Right ventricle myocardium superior (tissue), 1 donor: ENCODE measurements at regions of chr15 and their contacts with region 1.

Region 1: GRCh38 chr15:75201609-75202250 is at the start of gene C15orf39:
- DNase-seq: peak; percentile 87
- ATAC-seq: peak; percentile 84
- total RNA-seq, gene C15orf39: 15.8 TPM

Region 2: GRCh38 chr15:74956648-74957300 is 245.0 kb before region 1 on chr15 and contains the start of gene RPP25:
- intact Hi-C with region 1: loop called (anchors 10 kb)
- DNase-seq: peak; percentile 90
- ATAC-seq: peak; percentile 91
- total RNA-seq, gene RPP25: 3.4 TPM

Region 3: GRCh38 chr15:75029378-75030022 is 172.2 kb before region 1 on chr15:
- intact Hi-C with region 1: loop called (anchors 1 kb)
- DNase-seq: peak; percentile 97
- ATAC-seq: peak; percentile 89

Region 4: DNA sequence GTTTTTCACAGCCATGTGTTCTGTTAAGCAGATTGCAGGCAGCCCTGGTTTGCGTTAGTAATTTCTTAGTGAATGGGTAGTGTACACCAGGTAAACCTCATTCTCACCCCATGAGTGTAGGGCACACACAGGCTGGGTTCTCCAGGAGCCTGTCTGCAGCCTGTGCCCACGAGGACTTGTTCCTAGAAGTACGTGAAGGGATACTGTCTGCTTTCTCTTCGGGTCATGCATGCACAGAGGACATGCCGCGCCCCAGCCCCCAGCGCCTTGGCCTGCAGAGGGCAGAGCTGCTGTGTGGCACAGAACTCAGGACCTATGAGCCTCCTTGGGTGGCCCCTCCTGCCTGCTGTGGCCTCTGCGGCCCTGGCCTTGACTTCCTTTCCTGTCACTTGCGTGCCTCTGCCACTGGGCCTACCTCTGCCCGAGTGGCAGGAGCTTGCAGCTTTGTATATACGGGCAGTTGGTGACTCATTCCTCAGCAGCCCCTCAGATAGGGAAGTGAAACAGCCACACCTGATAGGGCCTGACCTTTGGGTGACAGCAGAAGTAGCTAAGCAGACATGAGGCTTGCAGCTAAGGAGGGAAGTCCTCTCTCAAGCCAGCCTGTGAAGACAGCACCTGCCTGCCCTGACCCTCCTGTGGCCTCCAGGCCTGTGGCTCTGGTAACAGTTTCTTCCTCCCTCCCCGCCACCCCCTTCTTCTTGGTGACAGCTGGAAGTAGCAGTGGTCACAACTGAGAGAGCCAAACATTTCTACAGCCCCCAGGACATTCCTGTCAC is 158.8 kb before region 1 on chr15:
- intact Hi-C with region 1: loop called (anchors 1 kb)
- DNase-seq: peak; percentile 92
- ATAC-seq: peak; percentile 71

Region 5: DNA sequence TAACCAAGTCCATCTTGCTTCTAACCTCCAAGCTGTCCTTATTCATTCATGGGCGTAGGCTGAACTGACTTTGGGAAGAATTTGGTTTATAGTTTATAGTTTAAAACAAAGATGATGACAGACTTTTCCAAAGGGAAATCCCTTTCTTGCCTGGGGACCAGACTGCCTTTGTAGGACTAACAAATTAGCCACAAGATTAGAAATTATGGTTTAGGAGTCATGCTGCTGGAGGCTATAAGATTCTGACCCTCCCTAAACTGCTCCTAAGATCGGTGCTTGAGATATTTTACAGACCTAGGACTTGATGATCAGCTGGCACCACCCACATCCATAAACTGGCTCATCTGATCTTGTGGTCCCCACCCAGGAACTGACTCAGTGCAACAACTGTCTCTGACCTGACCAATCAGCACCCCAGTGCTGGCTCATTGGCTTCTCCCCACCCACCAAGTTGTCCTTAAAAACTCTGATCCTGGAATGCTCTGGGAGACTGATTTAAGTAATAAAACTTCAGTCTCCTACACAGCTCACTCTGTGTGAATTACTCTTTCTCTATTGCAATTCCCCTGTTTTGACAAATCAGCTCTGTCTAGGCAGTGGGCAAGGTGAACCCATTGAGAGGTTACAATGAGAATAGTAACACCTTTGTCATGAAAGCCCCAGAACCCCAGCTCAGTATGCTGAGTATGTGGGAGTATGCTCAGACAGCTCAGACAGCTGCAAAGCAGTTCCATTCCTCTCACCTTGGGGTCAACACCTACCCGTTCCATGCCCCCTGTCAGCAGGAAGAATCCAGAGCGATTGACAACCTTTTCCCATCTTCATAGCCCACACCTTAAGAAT is 51.6 kb before region 1 on chr15:
- intact Hi-C with region 1: no loop called
- DNase-seq: no peak
- ATAC-seq: peak; percentile 39

Region 6: DNA sequence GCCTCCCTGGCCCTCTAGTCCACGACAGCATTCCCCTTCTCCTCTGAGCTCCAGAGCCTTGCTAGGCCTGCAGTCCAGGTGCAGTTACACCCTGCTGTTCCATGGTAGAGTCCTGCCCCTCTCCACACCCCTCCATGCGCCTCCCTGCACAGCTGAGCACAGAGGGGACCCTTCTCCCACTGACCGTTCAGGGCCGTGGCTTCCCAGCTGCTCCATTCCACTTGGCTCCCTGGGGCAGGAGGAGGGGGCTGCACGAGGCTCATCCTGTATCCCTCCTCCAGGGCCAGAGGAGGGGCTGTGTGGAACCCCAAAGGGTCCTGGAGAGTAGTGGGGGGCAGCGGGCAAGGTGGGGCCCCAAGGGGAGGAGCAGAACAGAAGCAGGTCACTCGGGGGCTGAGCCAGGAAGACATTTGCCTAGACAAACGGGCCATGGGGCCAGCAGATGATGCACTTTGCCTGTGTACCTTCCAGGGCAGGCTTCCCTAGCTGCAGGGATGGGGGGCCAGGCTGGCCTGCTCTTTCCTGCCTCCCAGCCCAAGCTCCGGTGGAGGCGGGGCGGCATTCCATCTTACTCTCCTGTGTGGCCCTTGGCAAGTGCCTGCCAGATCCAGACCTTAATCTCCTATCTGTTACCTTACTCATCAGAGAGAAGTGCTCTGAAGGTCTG is 35.7 kb after region 1 on chr15:
- intact Hi-C with region 1: no loop called
- DNase-seq: no peak
- ATAC-seq: no peak

Region 7: DNA sequence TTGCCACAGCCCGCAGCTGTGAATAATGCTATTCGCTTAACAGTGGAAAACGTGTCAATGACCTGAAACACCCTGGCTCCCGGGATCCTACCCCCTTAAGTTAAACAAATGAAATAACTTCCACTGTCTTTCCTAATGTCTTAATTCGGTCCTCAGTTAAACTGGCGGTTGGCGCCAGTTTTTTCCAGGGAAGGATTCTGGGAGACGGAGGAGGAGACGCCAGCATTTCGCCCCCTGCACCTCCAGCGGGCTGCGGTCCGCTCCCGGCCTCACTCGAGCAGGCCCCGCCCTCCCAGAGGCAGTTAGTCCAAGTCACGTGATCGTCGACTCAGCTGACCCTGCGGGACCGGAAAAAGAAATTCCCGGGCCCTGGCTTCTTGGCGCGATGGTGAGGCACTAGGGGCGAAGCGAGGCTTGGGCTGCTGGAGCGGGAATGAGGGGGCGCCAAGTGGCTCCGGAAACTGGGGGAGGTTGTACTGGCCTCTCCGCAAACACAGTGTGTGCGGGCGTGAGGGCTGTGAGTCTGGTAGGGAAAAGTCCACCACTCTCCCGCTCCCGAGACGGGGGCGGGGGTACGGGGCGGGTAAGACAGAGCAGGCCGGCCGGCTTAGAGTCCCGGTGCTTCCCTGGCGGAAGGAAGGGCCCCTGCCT is 134.1 kb after region 1 on chr15 and contains the start of gene COMMD4:
- intact Hi-C with region 1: no loop called
- DNase-seq: peak; percentile 97
- ATAC-seq: peak; percentile 97
- total RNA-seq, gene COMMD4: 40.7 TPM